Activated B cell treated with CpG ODN at 0.5 μM for 24 hours (primary cell): ENCODE measurements at regions of chr14 and their contacts with region 1.

Region 1: GRCh38 chr14:59464486-59465315 is 479 bp downstream of the GPR135 start:
- DNase-seq: peak; percentile 64
- ATAC-seq: peak; percentile 68
- H3K4me3 Mint-ChIP-seq: peak overlapping the region; percentile 86
- H3K27ac Mint-ChIP-seq: peak overlapping the region; percentile 48
- H3K4me1 Mint-ChIP-seq: peaks cover 14% of the 10 kb centered on the region
- H3K27me3 Mint-ChIP-seq: no peaks in the 10 kb centered on the region
- CTCF ChIP-seq: no peak

Region 2: GRCh38 chr14:58637391-58638230 is 827.1 kb before region 1 on chr14 and contains the start of gene DACT1:
- CTCF ChIA-PET with region 1: no interaction called
- POLR2A ChIA-PET with region 1: no interaction called
- intact Hi-C with region 1: loop called (anchors 5 kb)
- DNase-seq: peak; percentile 52
- ATAC-seq: peak; percentile 80
- H3K4me3 Mint-ChIP-seq: peak within 1 kb of the TSS; percentile 94
- H3K27ac Mint-ChIP-seq: peak within 1 kb of the TSS; percentile 90
- H3K4me1 Mint-ChIP-seq: peaks cover 46% of the 10 kb centered on the region
- H3K27me3 Mint-ChIP-seq: peaks cover 17% of the 10 kb centered on the region
- CTCF ChIP-seq: no peak
- total RNA-seq, gene DACT1: 3.0 and 3.5 TPM in 2 replicates

Region 3: DNA sequence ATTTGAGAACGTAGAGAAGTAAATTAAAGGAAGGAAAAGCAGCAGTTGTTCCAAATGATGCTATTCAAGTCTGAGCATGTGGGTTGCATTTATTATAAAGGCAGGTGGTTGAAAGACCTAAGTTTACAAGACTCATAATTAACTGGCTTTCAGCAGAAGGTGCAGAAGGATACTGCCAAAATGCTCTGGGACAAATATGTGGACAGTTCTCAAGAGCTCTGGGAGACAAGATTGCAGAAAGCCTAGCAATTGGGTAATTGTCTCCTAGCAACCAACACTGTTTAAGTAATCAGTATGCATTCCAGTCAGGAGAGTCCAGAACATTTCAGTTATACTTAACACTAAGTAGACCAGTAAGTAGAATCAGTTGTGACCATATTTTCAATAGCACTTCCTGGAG is 131.0 kb before region 1 on chr14:
- CTCF ChIA-PET with region 1: no interaction called
- POLR2A ChIA-PET with region 1: no interaction called
- intact Hi-C with region 1: no loop called
- DNase-seq: no peak
- ATAC-seq: no peak
- H3K4me3 Mint-ChIP-seq: no peak overlapping the region
- H3K27ac Mint-ChIP-seq: no peak overlapping the region
- H3K4me1 Mint-ChIP-seq: no peaks in the 10 kb centered on the region
- H3K27me3 Mint-ChIP-seq: no peaks in the 10 kb centered on the region
- CTCF ChIP-seq: no peak